Ascending aorta (tissue), 2 donors: ENCODE measurements at regions of chr2 and their contacts with region 1.

Region 1: GRCh38 chr2:3518496-3519254 is 656 bp downstream of the ADI1 start:
- DNase-seq: peak; percentile 91 to 98
- H3K4me3 ChIP-seq: peak overlapping the region; percentile 84 to 93
- H3K27ac ChIP-seq: peak overlapping the region; percentile 97 to 100
- H3K4me1 ChIP-seq: peaks cover 4 to 18% of the 10 kb centered on the region in 2 donors
- H3K27me3 ChIP-seq: no peaks in the 10 kb centered on the region
- CTCF ChIP-seq: no peak

Region 2: DNA sequence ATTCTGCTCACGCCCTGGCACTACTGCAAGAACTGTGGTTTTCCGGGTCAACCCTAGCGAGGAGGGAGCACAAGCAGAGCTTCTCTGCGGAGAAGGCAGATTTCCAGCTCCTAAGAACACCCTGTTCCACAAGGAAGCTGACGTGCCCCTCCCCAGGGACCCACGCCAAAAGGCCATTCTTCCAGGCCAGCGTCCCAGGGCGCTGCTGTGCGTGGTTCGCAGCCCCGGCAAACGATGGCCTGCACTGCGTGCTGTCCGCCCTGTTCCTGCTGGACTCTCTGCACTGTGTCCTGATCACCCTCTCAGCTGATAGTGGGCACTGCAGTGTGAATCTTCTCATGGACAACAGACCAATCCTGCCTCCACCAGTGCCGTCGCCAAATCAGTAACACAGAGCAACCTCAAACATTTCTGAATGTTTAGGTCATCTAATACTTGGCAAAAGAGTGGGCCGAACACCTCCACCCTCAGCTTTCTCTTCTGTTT is 48.5 kb before region 1 on chr2:
- intact Hi-C with region 1: loop called (anchors 1 kb)
- DNase-seq: peak; percentile 60 to 93
- H3K4me3 ChIP-seq: peak overlapping the region in 1 of 2 donors; percentile 25
- H3K27ac ChIP-seq: peak overlapping the region; percentile 90 to 91
- H3K4me1 ChIP-seq: peaks cover 2 to 28% of the 10 kb centered on the region in 2 donors
- H3K27me3 ChIP-seq: no peaks in the 10 kb centered on the region
- CTCF ChIP-seq: no peak

Region 3: DNA sequence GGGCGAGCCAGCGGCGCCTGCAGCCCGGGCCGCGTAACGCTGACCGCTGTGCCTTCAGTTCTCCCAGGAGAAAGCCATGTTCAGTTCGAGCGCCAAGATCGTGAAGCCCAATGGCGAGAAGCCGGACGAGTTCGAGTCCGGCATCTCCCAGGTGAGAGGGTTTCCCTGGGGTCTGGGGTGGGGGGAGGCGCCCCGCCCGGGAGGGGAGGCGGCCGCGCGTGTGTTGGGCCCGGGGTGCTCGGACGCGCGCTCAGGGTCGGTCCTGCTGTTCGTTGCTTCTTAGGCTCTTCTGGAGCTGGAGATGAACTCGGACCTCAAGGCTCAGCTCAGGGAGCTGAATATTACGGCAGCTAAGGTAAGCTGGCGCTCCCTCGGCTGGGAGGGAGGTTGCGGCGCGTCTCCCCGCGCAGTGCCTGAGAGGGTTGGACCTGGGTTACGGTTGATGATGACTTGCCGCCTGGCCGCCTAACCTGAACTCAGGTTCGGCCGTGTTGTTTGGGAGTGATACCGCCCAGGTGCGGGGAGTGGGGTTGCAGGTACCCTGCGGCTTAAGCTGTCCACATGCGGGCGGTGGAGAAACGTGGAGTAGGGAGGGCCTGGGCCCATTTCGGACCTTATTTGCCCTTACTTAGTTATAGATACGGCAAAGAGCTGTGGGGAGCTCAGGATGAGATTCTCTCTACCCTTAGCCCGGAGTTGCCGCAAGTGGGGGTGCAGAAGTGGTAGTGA is 57.0 kb after region 1 on chr2:
- intact Hi-C with region 1: loop called (anchors 1 kb)
- DNase-seq: no peak
- H3K4me3 ChIP-seq: peak overlapping the region; percentile 73 to 89
- H3K27ac ChIP-seq: peak overlapping the region; percentile 88 to 94
- H3K4me1 ChIP-seq: peaks cover 9 to 11% of the 10 kb centered on the region in 2 donors
- H3K27me3 ChIP-seq: no peaks in the 10 kb centered on the region
- CTCF ChIP-seq: no peak